ENCODE measurements at regions of chr17 and their contacts with region 1.

Region 1: DNA sequence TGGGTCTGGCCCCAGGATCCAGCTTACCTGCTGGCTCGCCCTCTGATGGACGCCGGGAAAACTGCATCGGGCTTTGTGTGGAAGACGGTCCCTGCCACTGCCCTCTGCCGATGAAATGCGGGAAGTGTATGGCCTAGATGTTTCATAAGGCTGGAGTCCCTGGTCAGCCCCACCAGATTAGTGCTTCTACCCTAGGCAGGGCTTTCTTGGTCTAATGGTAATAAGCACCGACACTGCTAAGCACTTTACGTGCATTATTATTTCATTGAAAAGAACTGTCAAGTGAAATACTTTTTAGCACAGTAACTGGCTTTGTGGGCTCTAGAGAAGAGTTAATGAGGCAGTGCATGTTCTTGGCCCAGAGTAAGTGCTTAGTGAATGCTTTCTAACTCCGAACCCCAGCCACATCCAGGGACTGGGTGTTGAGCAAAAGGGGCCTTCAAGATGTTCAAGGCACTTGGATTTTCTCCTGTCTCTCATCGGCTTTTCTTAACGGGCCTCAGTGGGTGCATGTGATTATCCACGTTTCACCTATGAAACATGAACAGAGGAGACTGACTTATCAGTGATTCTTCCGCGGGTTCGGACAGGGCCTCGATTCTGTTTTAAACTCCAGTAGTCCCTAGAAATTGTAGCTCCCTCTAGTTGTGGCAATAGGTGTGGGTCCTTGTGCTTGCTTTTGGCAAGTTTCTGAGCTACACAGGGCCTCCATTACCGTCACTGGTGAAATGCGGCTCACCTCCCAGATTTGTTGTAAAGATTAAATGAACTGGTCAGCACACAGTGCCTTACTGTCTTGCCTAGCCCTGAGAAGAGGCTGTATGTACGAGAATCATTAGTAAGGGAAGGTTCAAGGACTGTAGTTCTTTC is 6.6 kb downstream of the TRAF4 start:
- DNase-seq: peak; percentile 94
- H3K4me3 Mint-ChIP-seq: no peak overlapping the region
- H3K27ac Mint-ChIP-seq: peak overlapping the region; percentile 42
- H3K4me1 Mint-ChIP-seq: peaks cover 26% of the 10 kb centered on the region
- H3K27me3 Mint-ChIP-seq: no peaks in the 10 kb centered on the region

Region 2: DNA sequence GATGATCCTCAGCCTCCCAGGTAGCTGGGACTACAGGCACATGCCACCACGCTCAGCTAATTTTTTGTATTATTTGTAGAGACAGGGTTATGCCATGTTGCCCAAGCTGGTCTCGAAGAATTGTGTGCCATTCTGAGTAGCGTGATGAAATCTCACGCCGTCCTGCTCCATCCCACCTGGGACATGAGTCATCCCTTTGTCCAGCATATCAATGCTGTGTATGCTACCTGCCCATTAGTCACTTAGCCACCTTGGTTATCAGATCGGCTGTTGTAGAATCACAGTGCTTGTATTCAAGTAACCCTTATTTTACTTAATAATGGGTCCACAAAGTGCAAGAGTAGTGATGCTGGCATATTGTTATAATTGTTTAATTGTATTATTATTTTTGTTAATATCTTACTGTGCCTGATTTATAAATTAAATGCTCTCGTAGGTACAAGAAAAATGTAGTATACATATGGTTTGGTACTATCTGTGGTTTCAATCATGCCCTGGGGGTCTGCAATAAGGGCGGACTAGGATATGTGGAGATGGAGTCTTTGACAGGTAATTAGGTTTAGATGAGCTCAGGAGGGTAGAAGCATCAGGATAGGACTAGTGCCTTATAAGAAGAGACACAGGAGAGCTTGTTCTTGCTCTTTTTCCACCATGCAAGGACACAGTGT is 303.6 kb before region 1 on chr17:
- CTCF ChIA-PET with region 1: no interaction called
- POLR2A ChIA-PET with region 1: no interaction called
- intact Hi-C with region 1: no loop called
- DNase-seq: no peak
- H3K4me3 Mint-ChIP-seq: no peak overlapping the region
- H3K27ac Mint-ChIP-seq: no peak overlapping the region
- H3K4me1 Mint-ChIP-seq: no peaks in the 10 kb centered on the region
- H3K27me3 Mint-ChIP-seq: peaks cover 2% of the 10 kb centered on the region

Region 3: DNA sequence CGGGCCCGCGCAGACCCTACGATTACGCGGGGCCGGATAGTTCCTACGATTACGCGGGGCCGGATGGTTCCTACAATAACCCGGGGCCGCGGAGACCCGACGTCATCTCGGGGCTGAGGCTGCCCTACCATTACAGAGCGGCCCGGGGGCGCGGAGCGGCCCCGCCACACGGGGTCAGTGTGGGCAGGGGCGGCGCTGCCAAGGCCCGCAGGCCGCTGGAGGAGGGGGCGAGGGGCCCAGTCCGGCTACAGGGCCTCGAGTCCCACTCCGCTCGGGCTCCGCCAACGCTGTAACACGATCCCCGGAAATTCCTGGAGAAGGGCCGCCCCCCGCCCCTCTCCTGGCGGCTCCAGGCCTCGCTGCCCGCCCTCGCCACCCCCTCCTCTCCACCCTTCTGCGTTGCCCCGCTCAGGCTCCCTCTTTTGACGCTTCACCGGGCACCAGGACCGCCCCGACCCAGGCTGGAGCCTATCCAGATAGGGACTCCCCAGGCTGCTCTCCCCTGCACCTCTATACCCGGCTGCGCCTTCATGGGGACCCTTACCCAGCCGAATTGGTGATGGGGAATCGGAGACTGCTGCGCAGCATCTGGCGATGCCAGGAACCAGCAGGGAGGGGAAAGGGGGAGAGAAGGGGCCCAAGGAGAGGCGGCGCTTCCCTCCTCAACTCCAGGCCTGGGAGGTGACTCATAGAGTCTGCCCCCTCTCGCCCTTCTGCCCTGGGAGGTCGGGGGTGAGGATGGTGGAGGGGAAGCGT is 32.7 kb before region 1 on chr17 and contains the start of gene RAB34:
- CTCF ChIA-PET with region 1: interaction called, 632 read pairs
- POLR2A ChIA-PET with region 1: interaction called, 202 read pairs
- intact Hi-C with region 1: no loop called
- DNase-seq: peak; percentile 20
- H3K4me3 Mint-ChIP-seq: peak within 1 kb of the TSS; percentile 14
- H3K27ac Mint-ChIP-seq: peak within 1 kb of the TSS; percentile 71
- H3K4me1 Mint-ChIP-seq: peaks cover 30% of the 10 kb centered on the region
- H3K27me3 Mint-ChIP-seq: peaks cover 16% of the 10 kb centered on the region
- total RNA-seq, gene RAB34: 4.9 to 6.6 TPM

Region 4: DNA sequence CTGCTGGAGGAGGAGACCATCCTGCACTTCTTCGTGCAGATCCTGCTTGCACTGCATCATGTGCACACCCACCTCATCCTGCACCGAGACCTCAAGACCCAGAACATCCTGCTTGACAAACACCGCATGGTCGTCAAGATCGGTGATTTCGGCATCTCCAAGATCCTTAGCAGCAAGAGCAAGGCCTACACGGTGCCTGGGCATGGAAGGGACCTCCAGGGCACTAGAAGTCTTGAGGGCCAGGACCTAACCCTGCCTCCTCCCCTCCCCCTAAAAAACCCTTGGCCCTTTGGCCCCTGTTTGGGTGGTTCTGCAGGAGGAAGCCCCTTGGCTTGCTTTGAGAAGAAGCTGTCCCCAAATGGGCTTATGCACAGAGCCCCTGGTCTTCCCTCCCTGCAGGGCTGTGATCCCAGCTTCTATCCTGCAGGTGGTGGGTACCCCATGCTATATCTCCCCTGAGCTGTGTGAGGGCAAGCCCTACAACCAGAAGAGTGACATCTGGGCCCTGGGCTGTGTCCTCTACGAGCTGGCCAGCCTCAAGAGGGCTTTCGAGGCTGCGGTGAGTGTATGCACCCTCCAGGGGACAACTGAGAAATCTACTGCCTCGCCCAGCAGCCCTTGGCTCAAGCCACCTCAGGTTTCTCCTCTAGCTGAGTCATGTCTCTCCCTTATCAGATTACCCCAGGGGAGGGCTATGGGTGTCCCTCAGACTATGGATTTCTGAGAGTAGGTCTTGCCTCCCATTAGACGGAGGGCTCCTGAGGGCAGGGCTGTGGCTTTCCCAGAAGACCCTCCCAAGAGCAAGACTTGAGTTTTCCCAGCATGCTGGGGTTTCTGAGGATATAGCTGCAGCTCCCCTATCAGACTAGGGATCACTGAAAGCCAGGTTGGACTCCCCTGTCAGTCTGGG is 15.3 kb before region 1 on chr17:
- CTCF ChIA-PET with region 1: interaction called, 632 read pairs
- POLR2A ChIA-PET with region 1: interaction called, 5 read pairs
- intact Hi-C with region 1: no loop called
- DNase-seq: no peak
- H3K4me3 Mint-ChIP-seq: no peak overlapping the region
- H3K27ac Mint-ChIP-seq: no peak overlapping the region
- H3K4me1 Mint-ChIP-seq: peaks cover 26% of the 10 kb centered on the region
- H3K27me3 Mint-ChIP-seq: no peaks in the 10 kb centered on the region